Panc1 (cell line): ENCODE measurements at regions of chr1 and their contacts with region 1.

Region 1: DNA sequence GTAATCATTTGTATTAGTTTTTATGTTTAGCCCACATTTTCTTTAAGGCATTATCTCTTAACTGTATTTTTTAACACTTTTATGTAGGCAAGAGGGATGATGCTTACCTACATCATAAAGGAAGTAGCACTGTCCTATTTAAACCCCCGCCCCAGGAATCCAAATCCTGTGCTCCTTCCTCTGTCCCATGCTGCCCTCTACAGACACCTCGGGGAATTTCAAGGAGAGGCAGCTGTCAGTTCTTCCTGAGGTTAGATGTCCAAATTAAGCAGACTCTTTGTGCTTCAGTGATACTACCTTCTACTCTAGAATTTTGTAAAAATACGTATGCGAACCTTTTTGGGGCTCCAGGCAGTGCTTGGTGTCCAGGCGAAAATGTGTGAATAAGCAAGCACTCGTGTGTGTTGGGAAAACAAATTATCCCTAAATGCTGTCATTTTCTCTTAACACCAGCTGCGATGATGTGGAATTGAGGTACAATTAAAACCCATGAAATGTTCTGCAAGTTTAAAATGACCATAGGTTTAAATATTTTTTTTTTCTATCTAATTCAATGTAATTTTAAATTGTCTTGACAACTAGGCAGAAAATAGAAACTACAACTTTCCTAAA is 19.2 kb downstream of the CRCT1 start:
- DNase-seq: peak; percentile 33
- ATAC-seq: peak; percentile 75
- H3K4me3 ChIP-seq: no peak overlapping the region
- H3K27ac ChIP-seq: no peak overlapping the region
- H3K4me1 ChIP-seq: no peaks in the 10 kb centered on the region
- H3K27me3 ChIP-seq: peaks cover 4% of the 10 kb centered on the region; the same call in 1 of the 2 replicates
- CTCF ChIP-seq: peak; percentile 90

Region 2: DNA sequence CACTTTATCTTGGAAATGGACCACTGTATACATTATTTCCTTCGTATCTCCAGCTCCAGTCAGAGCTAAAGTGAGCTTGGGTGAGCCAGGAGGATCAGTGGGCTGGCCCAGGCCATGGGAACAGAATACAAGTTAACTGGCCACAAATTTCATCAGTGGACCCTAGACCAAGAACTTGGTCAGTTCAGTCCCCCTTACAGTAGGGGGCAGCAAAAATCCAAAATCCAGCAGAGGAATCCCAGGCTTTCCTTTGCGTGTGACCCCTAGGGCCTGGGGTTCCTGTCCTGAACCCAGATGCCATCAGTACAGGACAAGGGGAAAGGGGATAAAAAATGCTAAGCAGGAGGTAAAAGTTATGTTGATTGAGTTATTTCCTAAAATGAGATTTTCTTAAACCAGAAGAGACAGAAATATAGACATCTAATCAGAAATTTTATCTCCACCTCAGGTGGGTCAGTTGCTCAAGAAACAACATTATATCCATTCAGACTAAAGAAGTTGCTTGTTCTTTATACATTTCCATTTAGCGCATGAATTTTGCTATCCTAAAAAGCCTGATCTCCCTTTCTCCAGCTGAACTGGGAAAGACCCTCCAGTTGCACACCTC is 46.9 kb before region 1 on chr1:
- CTCF ChIA-PET with region 1: no interaction called
- POLR2A ChIA-PET with region 1: no interaction called
- in situ Hi-C with region 1: no loop called
- intact Hi-C with region 1: loop called (anchors 2 kb)
- DNase-seq: no peak
- ATAC-seq: peak; percentile 56; the same call in 1 of the 2 replicates
- H3K4me3 ChIP-seq: no peak overlapping the region
- H3K27ac ChIP-seq: no peak overlapping the region
- H3K4me1 ChIP-seq: no peaks in the 10 kb centered on the region
- H3K27me3 ChIP-seq: 0 out of 2 replicates have a peak, but pooled peaks cover 3% of the 10 kb centered on the region
- CTCF ChIP-seq: peak; percentile 79

Region 3: GRCh38 chr1:152497273-152497672 is 36.2 kb before region 1 on chr1:
- CTCF ChIA-PET with region 1: interaction called, 7 read pairs
- POLR2A ChIA-PET with region 1: no interaction called
- in situ Hi-C with region 1: no loop called
- intact Hi-C with region 1: loop called (anchors 2 kb)
- DNase-seq: no peak
- ATAC-seq: peak; percentile 61; the same call in 1 of the 2 replicates
- H3K4me3 ChIP-seq: no peak overlapping the region
- H3K27ac ChIP-seq: no peak overlapping the region
- H3K4me1 ChIP-seq: no peaks in the 10 kb centered on the region
- H3K27me3 ChIP-seq: no peaks in the 10 kb centered on the region; the same call in 1 of the 2 replicates
- CTCF ChIP-seq: peak; percentile 58; the same call in 1 of the 2 replicates